Left lung (tissue), 14 donors: ENCODE measurements at regions of chr10 and their contacts with region 1.

Region 1: GRCh38 chr10:92757066-92757710 is 67.4 kb downstream of the HHEX start:
- DNase-seq: peak; percentile 46 to 90 (median 86)
- ATAC-seq: peak; percentile 89
- H3K4me3 ChIP-seq: no peak overlapping the region
- H3K27ac ChIP-seq: peak overlapping the region; percentile 70 to 89
- H3K4me1 ChIP-seq: peaks cover 18 to 70% of the 10 kb centered on the region in 2 donors
- H3K27me3 ChIP-seq: no peaks in the 10 kb centered on the region
- CTCF ChIP-seq: peak in 1 of 2 donors; percentile 31

Region 2: GRCh38 chr10:92699518-92700381 is 57.4 kb before region 1 on chr10:
- intact Hi-C with region 1: loop called in 1 of 2 experiments (anchors 10 kb)
- DNase-seq: peak in 3 of 4 donors; percentile 42 to 83 (median 60)
- ATAC-seq: peak; percentile 68
- H3K4me3 ChIP-seq: peak overlapping the region; percentile 9 to 38
- H3K27ac ChIP-seq: peak overlapping the region in 1 of 2 donors; percentile 5
- H3K4me1 ChIP-seq: peaks cover 0 to 28% of the 10 kb centered on the region in 2 donors
- H3K27me3 ChIP-seq: peaks cover 5 to 41% of the 10 kb centered on the region in 2 donors
- CTCF ChIP-seq: no peak